MCF 10A (cell line): ENCODE measurements at regions of chr1 and their contacts with region 1.

Region 1: DNA sequence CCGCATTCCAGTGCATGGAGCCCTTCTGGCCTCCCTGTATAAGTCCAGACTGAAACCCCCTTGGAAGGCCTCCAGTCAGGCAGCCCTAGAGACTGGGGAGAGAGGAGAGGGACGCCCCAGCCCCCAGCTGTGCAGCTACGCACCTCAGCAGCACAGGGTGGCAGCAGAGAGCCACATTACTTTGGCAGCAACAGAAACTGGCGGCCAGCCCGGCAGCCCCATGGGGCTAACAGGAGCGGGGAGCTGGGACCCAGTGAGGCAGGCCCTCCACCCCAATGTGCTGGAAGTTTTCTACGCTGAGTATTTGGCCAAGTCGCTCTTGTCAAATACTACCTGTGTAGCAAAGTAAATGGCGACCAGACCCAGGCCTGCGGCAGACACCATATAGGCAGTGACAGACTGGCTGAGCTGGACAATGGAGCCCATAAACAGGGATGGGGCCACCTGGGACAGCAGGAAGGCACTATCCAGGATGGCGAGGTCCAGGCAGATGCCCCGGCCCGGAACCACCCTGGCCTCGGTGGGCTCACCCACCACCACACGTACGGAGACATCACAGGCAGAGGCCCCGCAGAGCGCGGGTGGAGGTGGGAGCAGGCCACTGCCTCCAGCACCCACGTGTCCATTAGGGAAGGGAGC is 21.2 kb downstream of the SLC45A3 start:
- DNase-seq: peak; percentile 90
- H3K4me3 Mint-ChIP-seq: no peak overlapping the region
- H3K27ac Mint-ChIP-seq: no peak overlapping the region
- H3K4me1 Mint-ChIP-seq: peaks cover 1% of the 10 kb centered on the region
- H3K27me3 Mint-ChIP-seq: no peaks in the 10 kb centered on the region
- CTCF ChIP-seq: peak; percentile 99

Region 2: GRCh38 chr1:204915861-204916495 is 743.1 kb before region 1 on chr1:
- CTCF ChIA-PET with region 1: no interaction called
- POLR2A ChIA-PET with region 1: no interaction called
- intact Hi-C with region 1: no loop called
- DNase-seq: peak; percentile 77
- H3K4me3 Mint-ChIP-seq: peak overlapping the region; percentile 32
- H3K27ac Mint-ChIP-seq: peak overlapping the region; percentile 7
- H3K4me1 Mint-ChIP-seq: peaks cover 13% of the 10 kb centered on the region
- H3K27me3 Mint-ChIP-seq: no peaks in the 10 kb centered on the region
- CTCF ChIP-seq: no peak

Region 3: GRCh38 chr1:205365945-205366463 is 293.1 kb before region 1 on chr1:
- CTCF ChIA-PET with region 1: no interaction called
- POLR2A ChIA-PET with region 1: no interaction called
- intact Hi-C with region 1: no loop called
- DNase-seq: peak; percentile 48
- H3K4me3 Mint-ChIP-seq: no peak overlapping the region
- H3K27ac Mint-ChIP-seq: no peak overlapping the region
- H3K4me1 Mint-ChIP-seq: peaks cover 7% of the 10 kb centered on the region
- H3K27me3 Mint-ChIP-seq: peaks cover 19% of the 10 kb centered on the region
- CTCF ChIP-seq: no peak

Region 4: DNA sequence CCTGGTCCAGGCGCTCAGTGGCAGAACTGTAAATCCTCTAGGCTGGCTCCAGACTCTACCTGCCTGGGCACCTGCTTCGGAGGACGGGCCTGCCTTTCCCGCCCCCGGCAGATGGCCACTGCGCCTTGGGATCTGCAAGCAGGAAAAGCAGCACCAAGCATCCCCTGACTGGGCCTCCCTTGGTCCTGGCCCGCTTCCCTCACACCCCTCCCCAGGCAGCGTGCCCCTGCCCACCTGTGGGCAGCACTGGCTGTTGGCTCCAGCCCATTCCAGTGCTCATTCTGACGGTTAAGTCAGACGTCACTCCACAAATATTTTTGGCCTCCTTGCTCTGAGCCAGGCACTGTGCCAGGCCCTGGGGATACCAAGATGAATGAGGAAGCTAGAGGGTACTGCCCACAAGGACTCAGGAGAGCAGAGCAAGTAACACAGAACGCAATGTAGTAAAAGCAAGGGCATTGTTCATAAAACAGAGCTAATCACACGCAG is 181.3 kb before region 1 on chr1:
- CTCF ChIA-PET with region 1: interaction called, 10 read pairs
- POLR2A ChIA-PET with region 1: no interaction called
- intact Hi-C with region 1: no loop called
- DNase-seq: peak; percentile 100
- H3K4me3 Mint-ChIP-seq: no peak overlapping the region
- H3K27ac Mint-ChIP-seq: peak overlapping the region; percentile 33
- H3K4me1 Mint-ChIP-seq: peaks cover 15% of the 10 kb centered on the region
- H3K27me3 Mint-ChIP-seq: peaks cover 40% of the 10 kb centered on the region
- CTCF ChIP-seq: no peak

Region 5: GRCh38 chr1:205554026-205554811 is 104.8 kb before region 1 on chr1:
- CTCF ChIA-PET with region 1: interaction called, 23 read pairs
- POLR2A ChIA-PET with region 1: no interaction called
- intact Hi-C with region 1: no loop called
- DNase-seq: no peak
- H3K4me3 Mint-ChIP-seq: no peak overlapping the region
- H3K27ac Mint-ChIP-seq: no peak overlapping the region
- H3K4me1 Mint-ChIP-seq: no peaks in the 10 kb centered on the region
- H3K27me3 Mint-ChIP-seq: peaks cover 93% of the 10 kb centered on the region
- CTCF ChIP-seq: no peak

Region 6: GRCh38 chr1:205616563-205617293 is 42.3 kb before region 1 on chr1:
- CTCF ChIA-PET with region 1: interaction called, 51 read pairs
- POLR2A ChIA-PET with region 1: interaction called, 3 read pairs
- intact Hi-C with region 1: no loop called
- DNase-seq: no peak
- H3K4me3 Mint-ChIP-seq: no peak overlapping the region
- H3K27ac Mint-ChIP-seq: no peak overlapping the region
- H3K4me1 Mint-ChIP-seq: peaks cover 6% of the 10 kb centered on the region
- H3K27me3 Mint-ChIP-seq: no peaks in the 10 kb centered on the region
- CTCF ChIP-seq: no peak

Region 7: DNA sequence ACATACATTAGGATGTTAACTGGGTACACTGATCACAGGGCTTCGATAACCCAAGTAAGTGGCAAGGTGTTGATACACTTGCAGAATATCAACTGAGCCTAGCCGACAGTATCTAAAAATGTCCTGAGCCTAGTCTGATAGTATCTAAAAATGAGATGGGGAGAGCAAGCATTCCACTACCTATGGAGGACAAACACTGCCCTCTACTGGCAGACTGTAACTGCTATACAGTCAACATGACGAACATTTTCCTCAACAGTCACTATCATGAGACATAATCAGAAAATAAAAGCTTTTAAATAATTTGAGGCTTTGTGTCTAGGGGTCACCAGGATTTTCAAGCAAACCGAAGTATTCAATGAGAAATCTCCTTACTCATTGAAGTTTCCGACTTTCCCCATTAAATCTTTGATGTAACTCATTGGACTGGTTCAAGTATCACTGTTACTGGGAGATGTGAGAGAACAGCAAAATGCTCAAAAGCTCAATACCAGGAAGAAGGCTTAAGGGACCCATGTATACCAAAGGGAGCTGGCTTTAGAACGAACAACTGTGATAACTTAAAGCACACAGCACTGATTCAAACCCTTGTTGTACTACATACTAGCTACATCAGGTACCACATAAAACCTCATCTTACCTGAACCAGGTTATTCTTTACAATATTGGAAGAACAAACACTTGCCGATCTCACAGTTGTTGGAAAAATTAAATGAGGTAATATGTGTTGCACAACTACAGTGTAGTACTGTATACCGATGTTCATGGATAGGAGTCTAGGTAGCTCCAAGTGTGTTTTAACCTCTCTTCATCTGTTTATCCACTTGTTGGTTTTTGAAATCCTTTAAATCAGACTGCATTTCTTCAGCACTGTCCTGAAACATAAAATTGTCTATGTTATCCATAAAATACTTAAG is 52.3 kb after region 1 on chr1:
- CTCF ChIA-PET with region 1: interaction called, 592 read pairs
- POLR2A ChIA-PET with region 1: interaction called, 88 read pairs
- intact Hi-C with region 1: loop called (anchors 1 kb)
- DNase-seq: peak; percentile 93
- H3K4me3 Mint-ChIP-seq: no peak overlapping the region
- H3K27ac Mint-ChIP-seq: no peak overlapping the region
- H3K4me1 Mint-ChIP-seq: peaks cover 30% of the 10 kb centered on the region
- H3K27me3 Mint-ChIP-seq: no peaks in the 10 kb centered on the region
- CTCF ChIP-seq: peak; percentile 97

Region 8: DNA sequence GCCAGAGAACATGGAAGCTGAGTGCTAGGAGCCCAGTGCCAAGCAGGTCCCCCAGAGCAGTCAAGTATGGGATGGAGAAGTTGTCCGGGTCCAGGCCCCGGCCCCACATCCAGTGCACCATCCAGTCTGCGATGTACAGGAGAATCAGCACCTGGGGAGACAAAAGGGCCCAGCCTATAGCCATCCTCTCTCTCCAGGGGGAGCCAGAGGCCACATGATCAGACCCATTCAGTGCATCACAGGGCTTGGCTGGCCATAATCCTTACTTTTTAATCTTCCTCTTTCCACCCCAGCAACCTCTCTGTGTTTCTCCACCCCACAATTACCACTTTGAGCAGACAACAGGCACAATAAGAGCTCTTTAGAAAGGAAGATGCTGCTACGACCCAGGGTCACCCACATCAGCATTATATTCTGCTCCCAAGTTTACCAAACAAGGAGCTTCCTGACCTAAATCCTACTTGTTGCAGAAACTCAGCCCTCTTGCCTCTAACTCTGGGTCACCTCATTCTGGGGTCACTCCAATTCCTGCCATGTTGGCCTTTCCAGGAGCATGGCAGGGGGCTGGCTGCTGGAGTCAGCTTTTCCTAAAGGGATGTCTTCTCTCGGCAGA is 132.6 kb after region 1 on chr1:
- CTCF ChIA-PET with region 1: interaction called, 39 read pairs
- POLR2A ChIA-PET with region 1: no interaction called
- intact Hi-C with region 1: loop called (anchors 5 kb)
- DNase-seq: peak; percentile 89
- H3K4me3 Mint-ChIP-seq: no peak overlapping the region
- H3K27ac Mint-ChIP-seq: no peak overlapping the region
- H3K4me1 Mint-ChIP-seq: no peaks in the 10 kb centered on the region
- H3K27me3 Mint-ChIP-seq: no peaks in the 10 kb centered on the region
- CTCF ChIP-seq: peak; percentile 99

Region 9: DNA sequence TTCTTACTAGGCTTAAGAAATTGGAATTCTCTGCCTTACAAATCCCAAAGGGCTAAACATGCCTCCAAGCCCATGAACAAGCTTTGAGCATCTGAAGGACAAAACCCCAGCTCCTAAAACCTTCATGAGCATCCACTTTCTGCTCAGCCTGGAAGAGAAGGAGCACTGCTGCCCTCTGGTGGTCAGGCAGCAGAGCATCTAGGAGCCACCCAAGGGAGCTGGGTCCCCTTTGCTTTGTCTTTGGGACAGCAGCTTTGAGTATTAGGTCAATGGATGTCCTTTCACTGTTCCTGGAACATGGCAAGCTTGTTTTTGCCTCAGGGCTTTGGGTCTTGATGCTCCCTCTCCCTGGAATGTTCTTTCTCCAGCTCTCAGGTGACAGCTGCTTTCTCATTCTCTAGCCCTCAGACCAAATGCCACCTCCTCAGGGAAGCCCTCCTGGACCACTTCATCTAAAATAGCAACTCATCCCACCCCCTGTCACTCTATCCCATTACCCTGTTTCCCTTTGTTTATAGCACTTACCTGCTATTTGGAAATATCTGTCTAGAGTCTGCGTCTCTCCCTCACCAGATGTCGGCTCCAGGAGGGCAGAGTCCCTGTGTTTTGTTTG is 318.4 kb after region 1 on chr1:
- CTCF ChIA-PET with region 1: interaction called, 46 read pairs
- POLR2A ChIA-PET with region 1: interaction called, 14 read pairs
- intact Hi-C with region 1: loop called (anchors 1 kb)
- DNase-seq: peak; percentile 93
- H3K4me3 Mint-ChIP-seq: no peak overlapping the region
- H3K27ac Mint-ChIP-seq: no peak overlapping the region
- H3K4me1 Mint-ChIP-seq: peaks cover 30% of the 10 kb centered on the region
- H3K27me3 Mint-ChIP-seq: peaks cover 11% of the 10 kb centered on the region
- CTCF ChIP-seq: peak; percentile 100

Region 10: DNA sequence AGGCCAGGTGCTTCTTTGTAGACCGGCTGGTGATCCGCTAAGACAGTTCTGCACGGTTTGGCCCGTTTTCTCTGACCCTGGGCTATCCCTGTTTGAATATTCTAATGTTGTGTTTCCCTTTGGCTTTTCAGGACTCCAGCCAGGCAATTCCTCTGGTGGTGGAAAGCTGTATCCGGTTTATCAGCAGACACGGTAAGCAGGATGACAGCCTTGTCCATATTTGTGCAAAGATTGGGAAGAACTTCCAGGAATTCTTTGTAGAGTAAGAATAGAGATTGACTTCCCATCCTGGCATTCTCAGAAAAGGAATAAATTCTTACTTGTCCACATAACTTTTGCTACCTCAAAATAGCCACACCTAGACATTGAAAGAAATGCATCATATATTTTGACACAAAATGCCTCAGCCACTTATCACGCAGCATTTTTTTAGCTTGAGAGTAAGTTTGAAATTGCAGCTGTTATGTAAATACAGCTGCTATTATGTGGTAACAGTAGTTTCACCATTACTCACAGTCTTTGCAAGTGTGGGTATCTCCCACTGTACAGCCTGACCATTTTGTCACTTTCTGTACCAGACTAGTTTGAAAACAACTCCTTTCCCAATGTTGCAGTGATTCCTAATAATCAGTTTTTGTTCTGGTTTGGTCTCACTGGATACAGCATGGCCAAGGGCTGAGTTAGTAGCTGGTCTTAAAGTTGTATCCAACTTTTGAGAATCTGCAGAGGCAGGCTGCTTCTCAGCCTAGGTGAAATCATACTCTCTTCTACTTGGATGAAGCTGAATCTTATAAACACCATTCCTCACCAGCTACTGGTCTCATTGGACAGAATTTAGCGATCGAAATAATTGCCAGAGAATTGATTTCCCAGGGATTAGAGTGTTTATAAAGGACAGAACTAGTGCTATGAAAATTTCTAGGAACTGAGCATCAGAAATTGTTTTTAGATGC is 771.2 kb after region 1 on chr1:
- CTCF ChIA-PET with region 1: no interaction called
- POLR2A ChIA-PET with region 1: no interaction called
- intact Hi-C with region 1: no loop called
- DNase-seq: peak; percentile 83
- H3K4me3 Mint-ChIP-seq: no peak overlapping the region
- H3K27ac Mint-ChIP-seq: peak overlapping the region; percentile 90
- H3K4me1 Mint-ChIP-seq: peaks cover 30% of the 10 kb centered on the region
- H3K27me3 Mint-ChIP-seq: no peaks in the 10 kb centered on the region
- CTCF ChIP-seq: peak; percentile 12